Ovary (tissue), 10 donors: ENCODE measurements at regions of chr17 and their contacts with region 1.

Region 1: DNA sequence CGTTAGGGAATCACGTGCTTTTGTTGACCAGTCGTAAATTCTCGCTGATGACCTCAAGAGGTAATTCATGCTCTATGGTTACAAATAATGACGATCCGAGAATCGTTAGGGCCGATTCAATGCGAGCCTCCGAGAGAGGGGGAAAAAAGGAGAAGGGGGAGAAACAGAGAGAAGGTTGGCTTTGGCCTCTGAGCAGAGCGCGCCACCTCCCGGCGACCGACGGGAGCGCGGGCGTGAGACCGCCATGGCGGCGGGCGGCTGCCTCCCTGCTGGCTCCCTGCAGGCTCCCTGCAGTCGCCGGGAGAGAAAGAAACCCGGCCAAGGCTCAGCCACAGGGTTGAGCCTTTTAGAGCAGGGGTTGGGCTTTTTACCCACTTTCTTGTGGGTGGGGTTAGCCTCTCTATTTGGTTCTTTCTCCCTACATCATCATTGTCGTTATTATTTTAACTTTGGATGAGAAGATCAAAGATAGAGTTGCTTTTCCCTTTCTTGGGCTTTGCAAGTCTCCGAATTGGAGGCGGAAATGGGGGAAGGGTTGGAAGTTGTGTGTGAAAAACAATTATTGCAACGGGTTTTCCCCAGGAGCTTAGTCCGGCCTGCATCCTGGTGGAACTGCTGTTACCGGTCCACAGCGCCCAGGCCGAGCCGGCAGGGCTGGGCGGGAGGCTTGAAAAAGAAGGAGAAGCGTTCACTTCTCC is 410 bp upstream of the HOXB5 start:
- DNase-seq: peak in 2 of 5 donors; percentile 41 to 57
- H3K4me3 ChIP-seq: peak overlapping the region; percentile 27
- H3K27ac ChIP-seq: no peak overlapping the region
- H3K4me1 ChIP-seq: no peaks in the 10 kb centered on the region
- H3K27me3 ChIP-seq: peaks cover 2% of the 10 kb centered on the region
- CTCF ChIP-seq: peak in 1 of 3 donors; percentile 21
- EP300 ChIP-seq: no peak
- POLR2A ChIP-seq: no peak

Region 2: GRCh38 chr17:48351831-48352332 is 242.1 kb before region 1 on chr17:
- intact Hi-C with region 1: loop called in 1 of 4 experiments (anchors 10 kb)
- DNase-seq: no peak
- H3K4me3 ChIP-seq: no peak overlapping the region
- H3K27ac ChIP-seq: no peak overlapping the region
- H3K4me1 ChIP-seq: no peaks in the 10 kb centered on the region
- H3K27me3 ChIP-seq: no peaks in the 10 kb centered on the region
- CTCF ChIP-seq: no peak
- EP300 ChIP-seq: no peak
- POLR2A ChIP-seq: no peak

Region 3: DNA sequence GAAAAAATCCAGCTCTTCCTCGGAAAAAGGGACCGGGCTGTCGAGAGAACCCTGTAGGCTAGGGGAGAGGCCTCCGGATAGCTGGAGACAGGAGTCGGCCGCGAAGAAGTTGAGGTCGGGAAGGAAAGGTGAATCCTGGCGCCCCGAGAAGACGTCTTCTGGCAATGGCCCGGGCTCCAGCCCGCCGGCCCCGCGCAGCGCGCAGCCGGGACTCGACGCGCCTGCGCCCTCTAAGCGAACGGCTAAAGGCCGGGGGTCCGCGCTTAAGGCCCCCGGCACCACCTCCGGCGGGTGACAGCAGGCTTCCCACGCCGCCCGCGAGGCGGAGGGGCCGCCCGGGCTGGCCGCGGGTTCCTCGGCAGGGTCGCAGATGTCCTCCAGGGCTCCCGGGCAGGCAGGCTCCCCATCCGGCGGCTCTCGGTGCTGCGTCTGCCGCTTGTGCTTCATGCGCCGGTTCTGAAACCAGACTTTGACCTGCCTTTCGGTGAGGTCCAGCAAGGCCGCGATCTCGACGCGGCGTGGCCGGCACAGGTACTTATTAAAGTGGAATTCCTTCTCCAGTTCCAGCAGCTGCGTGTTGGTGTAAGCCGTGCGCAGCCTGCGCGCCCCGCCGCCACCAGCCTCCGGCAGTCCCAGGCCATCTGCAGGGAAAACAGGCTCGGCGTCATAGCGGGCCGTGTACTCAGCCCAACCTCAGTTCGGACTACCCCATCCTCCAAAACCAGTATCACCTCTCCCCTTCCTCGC is 50.7 kb before region 1 on chr17:
- intact Hi-C with region 1: no loop called
- DNase-seq: no peak
- H3K4me3 ChIP-seq: peak overlapping the region; percentile 54
- H3K27ac ChIP-seq: peak overlapping the region; percentile 52 to 54
- H3K4me1 ChIP-seq: no peaks in the 10 kb centered on the region
- H3K27me3 ChIP-seq: no peaks in the 10 kb centered on the region
- CTCF ChIP-seq: no peak
- EP300 ChIP-seq: no peak
- POLR2A ChIP-seq: no peak

Region 4: DNA sequence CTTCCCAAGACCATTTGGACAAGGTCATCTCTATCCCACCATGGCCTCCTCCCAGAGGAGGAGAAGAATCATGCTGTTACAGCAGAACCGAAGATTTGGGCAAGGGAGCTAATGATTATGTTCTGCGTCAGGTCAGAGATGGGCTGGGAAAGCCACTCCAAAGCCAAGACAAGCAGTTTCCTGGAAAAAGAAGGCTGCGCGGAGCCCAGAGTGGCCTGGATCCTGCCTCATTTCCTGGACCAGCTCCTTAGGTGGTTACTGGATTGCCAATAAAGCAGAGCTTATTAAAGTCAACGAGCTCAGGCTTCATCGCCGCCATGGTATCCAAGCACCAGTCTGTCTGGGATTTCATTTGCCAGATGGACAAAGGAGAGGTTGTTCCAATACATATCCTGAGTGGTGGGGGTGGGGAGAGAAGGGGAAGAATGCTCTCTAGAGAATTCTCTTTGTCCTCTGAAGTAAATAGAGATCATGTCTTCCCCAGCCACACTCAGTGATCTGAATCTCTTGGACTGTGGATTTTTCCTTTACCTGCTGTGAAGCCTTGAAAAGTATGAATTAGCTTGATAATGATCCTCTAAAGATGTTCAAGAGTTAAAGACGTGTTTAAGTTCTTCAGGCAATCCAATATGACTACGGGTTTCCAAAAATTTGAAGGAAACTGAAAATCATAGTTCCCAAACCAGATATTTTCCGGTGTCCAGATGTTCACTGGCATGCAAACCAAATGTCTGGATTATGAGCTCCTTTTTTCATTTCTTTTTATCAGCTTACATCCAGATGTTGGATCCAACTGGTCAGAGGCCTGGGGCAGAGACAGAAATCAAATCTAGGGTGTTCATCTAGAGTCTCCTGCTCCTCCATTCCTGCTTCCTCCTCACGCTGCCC is 110.6 kb after region 1 on chr17:
- intact Hi-C with region 1: no loop called
- DNase-seq: no peak
- H3K4me3 ChIP-seq: no peak overlapping the region
- H3K27ac ChIP-seq: no peak overlapping the region
- H3K4me1 ChIP-seq: no peaks in the 10 kb centered on the region
- H3K27me3 ChIP-seq: no peaks in the 10 kb centered on the region
- CTCF ChIP-seq: no peak
- EP300 ChIP-seq: no peak
- POLR2A ChIP-seq: no peak